A673 (cell line): ENCODE measurements at regions of chr9 and their contacts with region 1.

Region 1: DNA sequence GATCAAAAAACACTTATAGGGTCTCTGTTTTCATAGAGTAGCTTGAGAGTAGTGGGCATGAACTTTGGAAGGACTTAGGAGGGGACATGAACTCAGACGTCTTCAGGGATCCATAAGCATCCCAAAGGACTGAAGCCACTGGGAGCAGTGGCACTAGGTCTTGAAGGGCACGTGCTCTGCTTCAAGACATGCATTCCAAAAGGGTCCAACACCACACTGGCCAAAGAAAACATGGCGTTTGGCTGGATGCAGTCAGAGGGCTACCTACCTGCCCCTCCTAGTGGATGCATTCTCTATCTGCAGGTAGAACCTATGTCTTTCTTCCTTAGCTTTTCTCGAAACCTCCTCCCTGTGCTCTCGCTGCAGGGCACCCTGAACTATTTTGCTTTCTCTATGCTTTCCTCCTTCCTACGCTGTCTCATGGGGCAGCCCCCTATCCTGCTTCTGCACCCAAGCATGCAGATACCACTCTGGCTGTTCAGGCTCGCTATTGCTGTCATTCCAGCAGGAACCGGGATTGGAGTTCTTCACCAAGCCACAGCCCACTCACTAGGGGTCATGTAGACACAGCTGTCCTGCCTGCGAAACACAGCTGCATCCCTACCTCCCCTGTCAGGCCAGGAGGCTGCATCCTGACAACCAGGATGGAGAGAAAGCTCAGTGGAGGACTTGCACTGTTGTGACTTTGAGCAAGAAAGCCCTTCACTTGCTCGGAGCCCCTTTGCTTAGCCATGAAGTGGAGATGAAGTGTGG is 11.9 kb downstream of the FAM240B start:
- DNase-seq: peak; percentile 18
- H3K4me3 ChIP-seq: no peak overlapping the region
- H3K27ac ChIP-seq: no peak overlapping the region
- H3K4me1 ChIP-seq: no peaks in the 10 kb centered on the region
- H3K27me3 ChIP-seq: peaks cover 39% of the 10 kb centered on the region
- CTCF ChIP-seq: peak; percentile 42

Region 2: DNA sequence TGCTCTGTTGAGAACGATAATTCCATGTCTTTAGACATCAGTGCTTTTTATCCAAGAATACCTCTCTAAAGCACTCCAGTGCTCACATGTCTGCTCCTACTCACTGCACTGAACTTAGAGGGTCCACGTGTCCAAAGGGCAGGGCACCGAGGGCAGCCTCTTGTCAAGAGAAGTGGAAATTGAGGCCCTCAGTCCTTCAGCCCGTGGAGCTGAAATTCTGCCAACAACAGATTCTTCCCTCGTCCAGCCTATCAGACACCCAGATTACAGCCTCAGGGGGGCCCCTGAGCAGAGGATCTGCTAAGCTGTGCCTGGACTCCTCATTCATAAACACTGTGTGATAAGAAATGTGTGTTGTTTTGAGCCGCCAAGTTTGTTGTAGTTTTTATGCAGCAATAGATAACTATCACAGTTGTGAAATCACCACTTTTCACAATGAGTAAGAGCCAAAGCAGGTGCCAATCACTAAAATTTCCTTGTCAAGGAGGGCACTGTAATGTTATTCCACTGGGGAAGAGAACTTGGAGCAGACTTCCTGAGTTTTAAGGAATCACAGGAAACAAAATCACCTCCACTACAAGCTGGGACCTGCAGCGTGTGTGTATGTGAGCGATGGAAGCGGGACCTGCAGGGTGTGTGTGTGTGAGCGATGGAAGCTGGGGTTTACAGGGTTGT is 225.0 kb before region 1 on chr9:
- CTCF ChIA-PET with region 1: no interaction called
- POLR2A ChIA-PET with region 1: no interaction called
- intact Hi-C with region 1: no loop called
- DNase-seq: no peak
- H3K4me3 ChIP-seq: no peak overlapping the region
- H3K27ac ChIP-seq: no peak overlapping the region
- H3K4me1 ChIP-seq: no peaks in the 10 kb centered on the region
- H3K27me3 ChIP-seq: no peaks in the 10 kb centered on the region
- CTCF ChIP-seq: no peak

Region 3: GRCh38 chr9:38651400-38652042 is 56.5 kb before region 1 on chr9:
- CTCF ChIA-PET with region 1: no interaction called
- POLR2A ChIA-PET with region 1: no interaction called
- intact Hi-C with region 1: loop called (anchors 10 kb)
- DNase-seq: no peak
- H3K4me3 ChIP-seq: no peak overlapping the region
- H3K27ac ChIP-seq: no peak overlapping the region
- H3K4me1 ChIP-seq: no peaks in the 10 kb centered on the region
- H3K27me3 ChIP-seq: peaks cover 5% of the 10 kb centered on the region
- CTCF ChIP-seq: no peak

Region 4: DNA sequence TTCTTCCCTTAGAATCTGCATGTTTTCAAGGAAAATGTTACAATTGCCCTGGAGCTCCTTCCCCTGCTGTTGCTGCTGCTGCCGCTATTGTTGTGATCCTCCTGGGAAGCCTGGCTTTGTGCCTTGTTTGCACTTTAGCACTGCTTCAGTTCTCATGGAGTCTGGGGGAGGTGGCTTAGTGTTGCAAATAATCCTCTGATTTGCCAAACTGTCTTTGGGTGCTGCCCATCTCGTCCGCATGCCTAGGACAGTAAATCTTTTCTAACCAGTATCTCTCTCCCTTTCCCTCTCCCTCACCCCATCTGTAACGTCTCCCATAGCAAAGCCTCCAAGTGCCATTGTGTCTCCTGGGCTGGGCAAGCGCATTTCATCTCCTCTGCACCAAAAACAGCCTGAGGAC is 18.4 kb before region 1 on chr9:
- CTCF ChIA-PET with region 1: no interaction called
- POLR2A ChIA-PET with region 1: no interaction called
- intact Hi-C with region 1: loop called (anchors 2 kb)
- DNase-seq: peak; percentile 91
- H3K4me3 ChIP-seq: no peak overlapping the region
- H3K27ac ChIP-seq: no peak overlapping the region
- H3K4me1 ChIP-seq: peaks cover 23% of the 10 kb centered on the region
- H3K27me3 ChIP-seq: no peaks in the 10 kb centered on the region
- CTCF ChIP-seq: no peak